ENCODE measurements at regions of chr6 and their contacts with region 1.

Region 1: GRCh38 chr6:89352278-89353117 is at the start of gene UBE2J1:
- DNase-seq: peak; percentile 87
- ATAC-seq: peak; percentile 81
- H3K4me3 ChIP-seq: peak within 1 kb of the TSS; percentile 72 to 99 (median 82)
- H3K4me3 Mint-ChIP-seq: peak within 1 kb of the TSS; percentile 93
- H3K27ac ChIP-seq: peak within 1 kb of the TSS; percentile 83 to 94
- H3K27ac Mint-ChIP-seq: peak within 1 kb of the TSS; percentile 95
- H3K4me1 ChIP-seq: peaks cover 73 to 74% of the 10 kb centered on the region in 2 donors
- H3K4me1 Mint-ChIP-seq: peaks cover 78% of the 10 kb centered on the region
- H3K27me3 ChIP-seq: no peaks in the 10 kb centered on the region
- H3K27me3 Mint-ChIP-seq: no peaks in the 10 kb centered on the region
- CTCF ChIP-seq: no peak
- total RNA-seq, gene UBE2J1: 28.0 and 31.1 TPM in 2 replicates

Region 2: DNA sequence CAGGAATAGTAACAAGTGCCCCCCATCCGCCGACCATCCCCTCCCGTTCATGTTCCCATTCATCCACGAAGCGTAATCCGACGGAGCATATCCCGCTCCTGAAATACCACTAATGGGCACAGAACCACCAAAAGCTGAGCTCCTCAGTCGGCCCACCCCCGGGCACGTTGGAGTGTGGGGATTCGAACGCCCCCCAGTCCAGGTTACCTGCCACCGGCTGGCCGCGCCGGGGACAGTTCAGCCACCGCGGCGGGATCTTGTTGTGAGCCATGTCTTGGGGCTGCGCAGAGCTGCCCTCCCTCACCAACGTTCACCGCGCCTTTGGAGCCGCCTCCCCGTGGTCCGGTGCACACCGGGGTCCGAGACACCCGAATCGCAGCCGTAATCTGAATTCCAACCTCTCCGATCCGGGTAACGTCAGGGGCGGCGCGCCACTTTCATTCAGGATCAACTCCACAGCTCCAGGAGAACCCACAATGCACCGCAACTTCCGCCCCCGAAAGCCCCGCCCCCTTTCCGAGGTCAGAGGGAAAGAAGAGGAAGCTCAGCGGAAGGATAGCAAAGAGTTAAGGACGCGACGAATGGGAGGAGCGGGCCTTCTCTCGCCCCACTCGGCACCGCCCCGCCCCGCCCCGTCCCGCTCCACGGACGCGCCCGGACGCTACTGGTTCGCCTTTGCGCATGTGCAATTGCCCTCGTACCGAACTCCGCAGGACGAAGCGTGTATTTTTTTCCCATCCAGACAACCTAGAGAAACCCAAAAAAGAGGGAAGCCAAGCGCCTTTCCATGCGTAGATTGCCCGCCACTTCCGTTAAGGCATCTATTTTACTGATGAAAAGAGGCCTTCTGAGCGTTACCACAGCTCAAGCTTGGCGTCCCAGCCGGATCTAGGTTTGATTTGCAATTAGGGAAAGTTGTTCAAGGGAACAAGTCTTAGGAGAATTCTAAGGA is 389.1 kb before region 1 on chr6 and contains the start of gene RNGTT:
- CTCF ChIA-PET with region 1: no interaction called
- POLR2A ChIA-PET with region 1: interaction called, 5 read pairs
- intact Hi-C with region 1: loop called (anchors 2 kb)
- DNase-seq: peak; percentile 97
- ATAC-seq: peak; percentile 100
- H3K4me3 ChIP-seq: peak within 1 kb of the TSS; percentile 92 to 94 (median 94)
- H3K4me3 Mint-ChIP-seq: peak within 1 kb of the TSS; percentile 98
- H3K27ac ChIP-seq: peak within 1 kb of the TSS; percentile 64 to 87
- H3K27ac Mint-ChIP-seq: peak within 1 kb of the TSS; percentile 96
- H3K4me1 ChIP-seq: peaks cover 10 to 17% of the 10 kb centered on the region in 2 donors
- H3K4me1 Mint-ChIP-seq: peaks cover 34% of the 10 kb centered on the region
- H3K27me3 ChIP-seq: no peaks in the 10 kb centered on the region
- H3K27me3 Mint-ChIP-seq: no peaks in the 10 kb centered on the region
- CTCF ChIP-seq: no peak
- total RNA-seq, gene RNGTT: 29.1 and 34.0 TPM in 2 replicates

Region 3: DNA sequence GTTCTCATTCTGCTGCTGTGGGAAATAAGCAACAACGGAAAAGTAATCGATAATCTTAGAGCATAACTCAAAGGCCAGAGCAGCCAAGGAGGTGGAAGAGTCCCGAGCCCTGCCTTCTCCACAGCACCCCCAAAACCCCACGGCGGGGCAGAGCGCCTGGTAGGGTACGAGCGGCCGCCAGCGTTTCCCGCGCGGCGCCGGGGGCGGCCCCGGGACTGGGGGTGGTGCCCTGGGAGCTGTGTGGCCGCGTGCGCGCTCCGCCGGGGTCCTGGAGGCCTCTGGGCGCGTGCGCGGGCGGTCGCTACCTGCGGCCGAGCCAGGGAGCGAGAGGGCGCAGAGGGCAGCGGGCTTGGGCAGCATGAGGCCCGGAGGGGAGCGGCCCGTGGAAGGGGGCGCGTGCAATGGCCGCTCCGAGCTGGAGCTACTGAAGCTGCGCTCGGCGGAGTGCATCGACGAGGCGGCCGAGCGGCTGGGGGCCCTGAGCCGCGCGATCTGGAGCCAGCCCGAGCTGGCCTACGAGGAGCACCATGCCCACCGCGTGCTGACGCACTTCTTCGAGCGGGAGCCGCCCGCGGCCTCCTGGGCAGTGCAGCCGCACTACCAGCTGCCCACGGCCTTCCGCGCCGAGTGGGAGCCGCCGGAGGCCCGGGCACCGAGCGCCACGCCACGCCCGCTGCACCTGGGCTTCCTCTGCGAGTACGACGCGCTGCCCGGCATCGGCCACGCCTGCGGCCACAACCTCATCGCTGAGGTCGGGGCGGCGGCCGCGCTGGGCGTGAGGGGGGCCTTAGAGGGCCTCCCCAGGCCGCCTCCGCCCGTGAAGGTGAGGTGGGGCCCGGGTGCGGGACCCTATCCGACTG is 206.5 kb before region 1 on chr6 and contains the start of gene PM20D2:
- CTCF ChIA-PET with region 1: no interaction called
- POLR2A ChIA-PET with region 1: no interaction called
- intact Hi-C with region 1: loop called (anchors 2 kb)
- DNase-seq: peak; percentile 78
- ATAC-seq: peak; percentile 77
- H3K4me3 ChIP-seq: peak within 1 kb of the TSS; percentile 65 to 85 (median 73)
- H3K4me3 Mint-ChIP-seq: peak within 1 kb of the TSS; percentile 95
- H3K27ac ChIP-seq: peak within 1 kb of the TSS; percentile 87 to 88
- H3K27ac Mint-ChIP-seq: peak within 1 kb of the TSS; percentile 94
- H3K4me1 ChIP-seq: peaks cover 9 to 11% of the 10 kb centered on the region in 2 donors
- H3K4me1 Mint-ChIP-seq: peaks cover 28% of the 10 kb centered on the region
- H3K27me3 ChIP-seq: no peaks in the 10 kb centered on the region
- H3K27me3 Mint-ChIP-seq: no peaks in the 10 kb centered on the region
- CTCF ChIP-seq: no peak
- total RNA-seq, gene PM20D2: 15.3 and 16.4 TPM in 2 replicates

Region 4: DNA sequence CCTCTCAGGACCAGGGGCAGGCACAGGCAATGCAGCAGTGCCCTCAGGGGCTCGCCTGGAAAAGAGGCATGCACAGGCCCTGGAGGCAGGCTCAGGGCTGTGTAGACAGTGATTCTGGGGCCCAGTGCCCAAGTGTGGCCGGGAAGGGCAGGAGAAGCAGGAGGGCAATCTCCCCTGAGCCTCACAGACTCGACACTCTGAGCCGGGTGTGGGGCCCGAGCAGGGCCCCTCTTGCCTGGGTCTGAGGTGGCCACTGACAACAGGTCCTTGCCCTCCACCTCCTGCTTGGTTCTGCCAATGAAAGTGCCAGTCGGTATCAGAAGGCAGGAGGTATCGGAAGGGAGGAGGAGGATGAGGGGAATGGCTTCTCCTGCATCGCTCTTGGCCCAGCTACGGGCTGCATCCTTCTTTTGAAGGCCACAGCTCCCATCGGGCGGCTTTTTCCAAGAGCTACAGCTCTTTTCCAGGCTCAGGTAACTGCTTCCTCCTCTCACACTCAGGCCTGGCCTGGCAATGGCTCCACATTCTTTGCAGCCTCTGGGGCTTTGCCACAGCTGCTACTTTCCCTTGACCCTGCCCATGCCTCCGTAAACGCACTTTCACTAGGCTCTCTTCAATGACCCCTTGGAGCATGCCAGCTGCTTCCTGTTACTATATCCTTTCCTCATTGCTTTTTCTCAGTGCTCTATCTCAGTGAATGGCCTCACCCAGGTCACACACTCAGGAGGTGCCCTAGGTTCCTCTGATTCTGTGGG is 61.9 kb before region 1 on chr6:
- CTCF ChIA-PET with region 1: no interaction called
- POLR2A ChIA-PET with region 1: no interaction called
- intact Hi-C with region 1: no loop called
- DNase-seq: no peak
- ATAC-seq: no peak
- H3K4me3 ChIP-seq: no peak overlapping the region
- H3K4me3 Mint-ChIP-seq: no peak overlapping the region
- H3K27ac ChIP-seq: no peak overlapping the region
- H3K27ac Mint-ChIP-seq: no peak overlapping the region
- H3K4me1 ChIP-seq: no peaks in the 10 kb centered on the region
- H3K4me1 Mint-ChIP-seq: no peaks in the 10 kb centered on the region
- H3K27me3 ChIP-seq: no peaks in the 10 kb centered on the region
- H3K27me3 Mint-ChIP-seq: no peaks in the 10 kb centered on the region
- CTCF ChIP-seq: no peak

Region 5: GRCh38 chr6:89638320-89639195 is 286.1 kb after region 1 on chr6 and contains the start of gene LYRM2:
- CTCF ChIA-PET with region 1: no interaction called
- POLR2A ChIA-PET with region 1: no interaction called
- intact Hi-C with region 1: loop called (anchors 2 kb)
- DNase-seq: peak; percentile 96
- ATAC-seq: peak; percentile 94
- H3K4me3 ChIP-seq: peak within 1 kb of the TSS; percentile 56 to 84 (median 79)
- H3K4me3 Mint-ChIP-seq: peak within 1 kb of the TSS; percentile 92
- H3K27ac ChIP-seq: peak within 1 kb of the TSS; percentile 91 to 99
- H3K27ac Mint-ChIP-seq: peak within 1 kb of the TSS; percentile 98
- H3K4me1 ChIP-seq: peaks cover 13 to 15% of the 10 kb centered on the region in 2 donors
- H3K4me1 Mint-ChIP-seq: peaks cover 28% of the 10 kb centered on the region
- H3K27me3 ChIP-seq: no peaks in the 10 kb centered on the region
- H3K27me3 Mint-ChIP-seq: no peaks in the 10 kb centered on the region
- CTCF ChIP-seq: no peak
- total RNA-seq, gene LYRM2: 31.4 and 33.7 TPM in 2 replicates

Region 6: GRCh38 chr6:90285611-90286381 is 933.3 kb after region 1 on chr6:
- CTCF ChIA-PET with region 1: no interaction called
- POLR2A ChIA-PET with region 1: no interaction called
- intact Hi-C with region 1: loop called (anchors 10 kb)
- DNase-seq: peak; percentile 87
- ATAC-seq: peak; percentile 70
- H3K4me3 ChIP-seq: peak overlapping the region; percentile 8 to 58 (median 32)
- H3K4me3 Mint-ChIP-seq: peak overlapping the region; percentile 73
- H3K27ac ChIP-seq: peak overlapping the region; percentile 80 to 90
- H3K27ac Mint-ChIP-seq: peak overlapping the region; percentile 85
- H3K4me1 ChIP-seq: peaks cover 78 to 90% of the 10 kb centered on the region in 2 donors
- H3K4me1 Mint-ChIP-seq: peaks cover 88% of the 10 kb centered on the region
- H3K27me3 ChIP-seq: no peaks in the 10 kb centered on the region
- H3K27me3 Mint-ChIP-seq: no peaks in the 10 kb centered on the region
- CTCF ChIP-seq: no peak